GM12878 (cell line): ENCODE measurements at regions of chr3 and their contacts with region 1.

Region 1: DNA sequence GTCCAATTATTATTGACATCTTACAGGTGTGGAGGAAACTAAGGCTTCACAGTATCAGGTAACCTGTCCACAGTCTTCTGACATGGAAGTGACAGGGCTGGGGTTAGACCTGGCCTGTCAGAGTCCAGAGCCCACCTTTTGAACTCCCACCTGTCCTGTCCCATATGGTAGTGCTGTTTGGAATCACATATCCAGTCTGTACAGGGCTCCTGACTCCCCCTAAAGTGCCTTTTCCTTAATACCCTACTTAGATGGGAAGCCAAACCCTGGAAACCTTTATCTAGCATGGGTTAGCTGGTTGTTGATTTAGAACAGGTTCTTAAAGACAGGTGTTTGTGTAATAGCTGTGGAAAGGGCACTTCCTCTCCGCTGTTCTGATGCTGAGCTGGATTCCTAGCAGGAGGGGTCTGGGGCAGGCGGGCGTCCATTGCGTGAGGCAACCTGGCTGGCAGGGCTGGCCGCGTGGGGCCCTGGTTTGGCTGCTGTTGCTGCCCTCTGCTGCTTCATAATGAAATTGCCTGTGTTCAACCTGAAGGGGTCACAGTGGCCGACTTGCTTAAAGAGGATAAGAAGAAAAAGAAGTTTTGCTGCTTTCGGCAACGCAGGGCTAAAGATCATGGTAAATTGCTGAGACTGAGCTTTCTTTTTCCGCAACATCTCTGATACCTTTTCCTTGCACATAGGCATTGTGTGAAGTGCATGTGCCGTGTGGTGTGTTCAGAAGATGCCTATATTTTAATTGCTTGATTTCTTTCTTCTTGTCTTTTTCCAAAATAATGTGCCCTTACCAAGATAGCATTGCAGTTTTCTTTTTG is 136.2 kb downstream of the CHDH start:
- DNase-seq: no peak
- ATAC-seq: peak; percentile 96
- H3K4me3 ChIP-seq: no peak overlapping the region
- H3K27ac ChIP-seq: no peak overlapping the region
- H3K4me1 ChIP-seq: no peaks in the 10 kb centered on the region; the same call in 1 of the 2 replicates
- H3K27me3 ChIP-seq: no peaks in the 10 kb centered on the region
- CTCF ChIP-seq: peak; percentile 81 to 91 (median 82)
- EP300 ChIP-seq: no peak
- POLR2A ChIP-seq: no peak
- RAD21 ChIP-seq: peak; percentile 78

Region 2: DNA sequence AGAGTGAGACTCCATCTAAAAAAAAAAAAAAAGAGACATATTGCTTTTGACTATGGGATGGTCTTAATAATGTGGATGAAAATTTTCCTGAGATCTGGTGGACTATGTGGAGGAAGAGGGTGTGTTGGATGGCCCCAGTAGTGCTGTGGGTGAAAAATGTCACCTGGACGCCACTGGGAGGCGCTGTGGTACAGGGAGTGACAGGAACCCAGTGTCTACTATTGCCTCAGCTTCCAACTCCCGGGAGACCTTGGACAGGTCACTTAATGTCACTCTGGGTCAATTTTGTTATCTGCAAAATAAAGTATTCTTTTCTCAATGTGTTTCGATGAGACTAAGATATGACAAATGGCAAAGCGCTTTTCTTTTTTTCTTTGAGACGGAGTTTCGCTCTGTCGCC is 335.0 kb before region 1 on chr3:
- CTCF ChIA-PET with region 1: interaction called, 113 read pairs
- POLR2A ChIA-PET with region 1: no interaction called
- RAD21 ChIA-PET with region 1: interaction called, 38 read pairs
- SMC1A ChIA-PET with region 1: interaction called, 26 read pairs
- in situ Hi-C with region 1: no loop called
- intact Hi-C with region 1: loop called (anchors 1 kb)
- DNase-seq: no peak
- ATAC-seq: peak; percentile 98
- H3K4me3 ChIP-seq: no peak overlapping the region
- H3K27ac ChIP-seq: no peak overlapping the region
- H3K4me1 ChIP-seq: no peaks in the 10 kb centered on the region
- H3K27me3 ChIP-seq: no peaks in the 10 kb centered on the region; a peak in 1 of 4 replicates
- CTCF ChIP-seq: peak; percentile 84 to 92 (median 87)
- EP300 ChIP-seq: no peak
- POLR2A ChIP-seq: no peak
- RAD21 ChIP-seq: peak; percentile 88

Region 3: GRCh38 chr3:53513556-53514190 is 196.4 kb before region 1 on chr3:
- CTCF ChIA-PET with region 1: interaction called, 12 read pairs
- POLR2A ChIA-PET with region 1: no interaction called
- RAD21 ChIA-PET with region 1: interaction called, 5 read pairs
- SMC1A ChIA-PET with region 1: interaction called, 4 read pairs
- in situ Hi-C with region 1: no loop called
- intact Hi-C with region 1: no loop called
- DNase-seq: no peak
- ATAC-seq: peak; percentile 94
- H3K4me3 ChIP-seq: no peak overlapping the region
- H3K27ac ChIP-seq: no peak overlapping the region
- H3K4me1 ChIP-seq: no peaks in the 10 kb centered on the region
- H3K27me3 ChIP-seq: peaks cover 0 to 6% of the 10 kb centered on the region in 2 experiments; a peak in 3 of 4 replicates
- CTCF ChIP-seq: peak; percentile 25 to 57 (median 39); a peak in 4 of 6 replicates
- EP300 ChIP-seq: no peak
- POLR2A ChIP-seq: no peak
- RAD21 ChIP-seq: peak; percentile 19; the same call in 1 of the 2 replicates

Region 4: GRCh38 chr3:53531749-53532148 is 178.3 kb before region 1 on chr3:
- CTCF ChIA-PET with region 1: interaction called, 13 read pairs
- POLR2A ChIA-PET with region 1: no interaction called
- RAD21 ChIA-PET with region 1: interaction called, 4 read pairs
- SMC1A ChIA-PET with region 1: interaction called, 3 read pairs
- in situ Hi-C with region 1: no loop called
- intact Hi-C with region 1: loop called (anchors 5 kb)
- DNase-seq: no peak
- ATAC-seq: peak; percentile 60
- H3K4me3 ChIP-seq: no peak overlapping the region
- H3K27ac ChIP-seq: no peak overlapping the region
- H3K4me1 ChIP-seq: no peaks in the 10 kb centered on the region
- H3K27me3 ChIP-seq: no peaks in the 10 kb centered on the region
- CTCF ChIP-seq: peak in 1 of 3 experiments; percentile 34; a peak in 1 of 6 replicates
- EP300 ChIP-seq: no peak
- POLR2A ChIP-seq: no peak
- RAD21 ChIP-seq: peak; percentile 25; the same call in 1 of the 2 replicates

Region 5: GRCh38 chr3:53628536-53629401 is 81.3 kb before region 1 on chr3:
- CTCF ChIA-PET with region 1: interaction called, 18 read pairs
- POLR2A ChIA-PET with region 1: no interaction called
- RAD21 ChIA-PET with region 1: no interaction called
- SMC1A ChIA-PET with region 1: interaction called, 7 read pairs
- in situ Hi-C with region 1: no loop called
- intact Hi-C with region 1: loop called (anchors 2 kb)
- DNase-seq: no peak
- ATAC-seq: peak; percentile 68
- H3K4me3 ChIP-seq: no peak overlapping the region
- H3K27ac ChIP-seq: no peak overlapping the region
- H3K4me1 ChIP-seq: no peaks in the 10 kb centered on the region
- H3K27me3 ChIP-seq: no peaks in the 10 kb centered on the region; a peak in 1 of 4 replicates
- CTCF ChIP-seq: no peak
- EP300 ChIP-seq: no peak
- POLR2A ChIP-seq: no peak
- RAD21 ChIP-seq: no peak

Region 6: GRCh38 chr3:53668872-53669271 is 41.2 kb before region 1 on chr3:
- CTCF ChIA-PET with region 1: interaction called, 20 read pairs
- POLR2A ChIA-PET with region 1: no interaction called
- RAD21 ChIA-PET with region 1: interaction called, 24 read pairs
- SMC1A ChIA-PET with region 1: interaction called, 21 read pairs
- in situ Hi-C with region 1: no loop called
- intact Hi-C with region 1: no loop called
- DNase-seq: no peak
- ATAC-seq: peak; percentile 38; the same call in 2 of the 3 replicates
- H3K4me3 ChIP-seq: no peak overlapping the region
- H3K27ac ChIP-seq: no peak overlapping the region
- H3K4me1 ChIP-seq: no peaks in the 10 kb centered on the region
- H3K27me3 ChIP-seq: peaks cover 0 to 4% of the 10 kb centered on the region in 2 experiments; a peak in 2 of 4 replicates
- CTCF ChIP-seq: peak; percentile 35 to 44 (median 39); a peak in 4 of 6 replicates
- EP300 ChIP-seq: no peak
- POLR2A ChIP-seq: no peak
- RAD21 ChIP-seq: peak; percentile 52; the same call in 1 of the 2 replicates

Region 7: GRCh38 chr3:53696401-53697150 is 13.5 kb before region 1 on chr3:
- CTCF ChIA-PET with region 1: interaction called, 38 read pairs
- POLR2A ChIA-PET with region 1: no interaction called
- RAD21 ChIA-PET with region 1: interaction called, 5 read pairs
- SMC1A ChIA-PET with region 1: interaction called, 9 read pairs
- in situ Hi-C with region 1: no loop called
- intact Hi-C with region 1: no loop called
- DNase-seq: no peak
- ATAC-seq: no peak
- H3K4me3 ChIP-seq: no peak overlapping the region
- H3K27ac ChIP-seq: no peak overlapping the region
- H3K4me1 ChIP-seq: no peaks in the 10 kb centered on the region
- H3K27me3 ChIP-seq: no peaks in the 10 kb centered on the region
- CTCF ChIP-seq: 0 out of 6 replicates have a peak, but pooled peaks of 1 of the 3 experiments have one; percentile 5
- EP300 ChIP-seq: no peak
- POLR2A ChIP-seq: no peak
- RAD21 ChIP-seq: no peak